Activated CD8-positive, alpha-beta T cell treated with anti-CD3 and anti-CD28 coated beads, Interleukin-2, amount 10 ng/mL, durations not matched to agents 7 days and 5 days (primary cell): ENCODE measurements at regions of chr6 and their contacts with region 1.

Region 1: GRCh38 chr6:129709769-129710449 is at the start of gene ARHGAP18:
- DNase-seq: peak; percentile 83
- ATAC-seq: peak; percentile 98
- H3K4me3 Mint-ChIP-seq: peak within 1 kb of the TSS; percentile 96
- H3K27ac Mint-ChIP-seq: peak within 1 kb of the TSS; percentile 86
- H3K4me1 Mint-ChIP-seq: peaks cover 48% of the 10 kb centered on the region
- H3K27me3 Mint-ChIP-seq: no peaks in the 10 kb centered on the region
- total RNA-seq, gene ARHGAP18: 11.9 to 12.1 TPM

Region 2: GRCh38 chr6:129539032-129539431 is 170.9 kb before region 1 on chr6:
- CTCF ChIA-PET with region 1: no interaction called
- POLR2A ChIA-PET with region 1: no interaction called
- DNase-seq: no peak
- ATAC-seq: no peak
- H3K4me3 Mint-ChIP-seq: no peak overlapping the region
- H3K27ac Mint-ChIP-seq: no peak overlapping the region
- H3K4me1 Mint-ChIP-seq: no peaks in the 10 kb centered on the region
- H3K27me3 Mint-ChIP-seq: peaks cover 6% of the 10 kb centered on the region

Region 3: DNA sequence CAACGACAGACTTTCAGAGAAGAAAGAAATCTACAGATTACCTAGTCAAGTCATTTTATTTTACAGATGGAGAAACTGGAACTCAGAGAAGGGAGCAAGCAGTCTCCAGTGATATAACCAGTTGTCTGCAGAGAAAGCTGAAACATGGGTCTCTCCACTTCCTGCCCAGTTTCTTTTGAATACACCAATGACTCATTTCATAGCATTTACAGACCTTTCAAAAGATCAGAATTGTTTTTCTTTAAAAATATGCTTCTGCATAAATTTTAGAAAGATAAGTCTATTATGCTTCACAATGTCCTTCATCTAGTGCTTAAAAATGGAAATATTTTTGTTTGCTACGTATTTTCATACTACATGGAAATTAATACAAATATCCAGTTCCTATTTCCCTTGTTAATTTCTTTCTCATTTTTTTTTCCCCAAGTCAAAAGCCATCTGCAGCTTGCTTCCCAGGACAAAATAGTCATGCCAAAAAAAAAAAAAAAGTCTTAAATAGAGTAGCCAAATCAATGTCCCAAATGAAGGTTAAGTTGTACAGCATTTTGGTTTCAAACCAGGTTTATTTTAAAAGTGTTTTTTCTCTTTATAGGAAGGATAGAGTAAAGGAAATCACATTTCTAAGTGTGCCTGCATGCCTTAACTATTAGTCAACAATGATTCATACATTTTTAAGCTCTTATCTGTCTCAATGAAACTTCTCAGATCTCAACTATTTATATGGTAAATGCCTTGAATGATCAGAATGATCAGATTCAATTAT is 36.8 kb before region 1 on chr6:
- CTCF ChIA-PET with region 1: interaction called, 10 read pairs
- POLR2A ChIA-PET with region 1: interaction called, 13 read pairs
- DNase-seq: peak; percentile 53
- ATAC-seq: peak; percentile 71
- H3K4me3 Mint-ChIP-seq: peak overlapping the region; percentile 68
- H3K27ac Mint-ChIP-seq: peak overlapping the region; percentile 97
- H3K4me1 Mint-ChIP-seq: peaks cover 47% of the 10 kb centered on the region
- H3K27me3 Mint-ChIP-seq: no peaks in the 10 kb centered on the region

Region 4: DNA sequence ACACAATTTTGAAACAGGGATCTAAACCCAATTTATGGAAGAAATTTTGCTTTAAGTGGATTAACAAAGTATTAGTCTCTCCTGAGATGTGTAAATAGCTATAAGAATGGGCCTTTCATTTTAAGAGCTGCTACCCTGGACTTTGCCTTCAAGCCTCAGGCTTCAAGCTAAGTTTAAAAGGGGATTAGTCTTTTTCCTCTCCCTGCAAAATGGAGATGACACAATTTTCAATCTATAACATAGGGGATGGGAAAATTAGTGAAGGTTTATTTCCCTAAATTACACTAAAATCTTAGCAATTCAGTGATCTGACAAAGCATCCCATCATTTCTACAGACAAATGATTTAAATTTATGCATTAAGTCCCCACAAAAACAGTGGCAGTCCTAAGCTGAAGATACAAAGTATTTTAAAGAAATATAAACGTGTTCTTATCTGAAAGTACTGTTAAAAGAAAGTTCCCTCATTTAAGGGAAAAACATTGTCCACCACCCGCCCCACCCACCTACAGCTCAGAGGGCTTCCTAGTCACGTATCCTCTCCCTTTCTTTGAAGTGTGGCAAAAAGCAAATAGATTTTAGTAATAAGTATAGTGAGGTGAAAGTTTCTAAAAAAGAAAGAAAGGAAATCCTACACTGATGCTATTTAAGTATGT is 14.4 kb before region 1 on chr6:
- CTCF ChIA-PET with region 1: interaction called, 11 read pairs
- POLR2A ChIA-PET with region 1: no interaction called
- DNase-seq: peak; percentile 36
- ATAC-seq: peak; percentile 87
- H3K4me3 Mint-ChIP-seq: peak overlapping the region; percentile 47
- H3K27ac Mint-ChIP-seq: peak overlapping the region; percentile 76
- H3K4me1 Mint-ChIP-seq: peaks cover 66% of the 10 kb centered on the region
- H3K27me3 Mint-ChIP-seq: no peaks in the 10 kb centered on the region